Heart right ventricle (tissue), 16 donors: ENCODE measurements at regions of chr11 and their contacts with region 1.

Region 1: GRCh38 chr11:75022759-75023396 is 34.1 kb downstream of the NEU3 start:
- DNase-seq: peak; percentile 75 to 79
- ATAC-seq: peak; percentile 67 to 95 (median 92)
- H3K4me3 ChIP-seq: no peak overlapping the region
- H3K27ac ChIP-seq: peak overlapping the region in 3 of 10 donors; percentile 5 to 60 (median 38)
- H3K4me1 ChIP-seq: peaks cover 0 to 21% (median 4%) of the 10 kb centered on the region in 9 donors
- H3K27me3 ChIP-seq: no peaks in the 10 kb centered on the region
- CTCF ChIP-seq: peak; percentile 81 to 97 (median 94)

Region 2: GRCh38 chr11:74418509-74418895 is 604.4 kb before region 1 on chr11:
- intact Hi-C with region 1: no loop called
- DNase-seq: no peak
- ATAC-seq: peak in 6 of 8 donors; percentile 12 to 79 (median 72)
- H3K4me3 ChIP-seq: no peak overlapping the region
- H3K27ac ChIP-seq: peak overlapping the region in 4 of 10 donors; percentile 30 to 72 (median 54)
- H3K4me1 ChIP-seq: peaks cover 0 to 15% (median 0%) of the 10 kb centered on the region in 9 donors
- H3K27me3 ChIP-seq: peaks cover 0 to under 1% (median 0%) of the 10 kb centered on the region in 7 donors
- CTCF ChIP-seq: no peak

Region 3: GRCh38 chr11:74683279-74683871 is 339.5 kb before region 1 on chr11:
- intact Hi-C with region 1: no loop called
- DNase-seq: peak in 1 of 2 donors; percentile 46
- ATAC-seq: peak in 5 of 8 donors; percentile 2 to 76 (median 36)
- H3K4me3 ChIP-seq: peak overlapping the region in 9 of 10 donors; percentile 26 to 56 (median 52)
- H3K27ac ChIP-seq: peak overlapping the region in 9 of 10 donors; percentile 32 to 77 (median 65)
- H3K4me1 ChIP-seq: peaks cover 0 to 68% (median 24%) of the 10 kb centered on the region in 9 donors
- H3K27me3 ChIP-seq: peaks cover 0 to 23% (median 5%) of the 10 kb centered on the region in 7 donors
- CTCF ChIP-seq: peak in 8 of 9 donors; percentile 36 to 57 (median 54)

Region 4: DNA sequence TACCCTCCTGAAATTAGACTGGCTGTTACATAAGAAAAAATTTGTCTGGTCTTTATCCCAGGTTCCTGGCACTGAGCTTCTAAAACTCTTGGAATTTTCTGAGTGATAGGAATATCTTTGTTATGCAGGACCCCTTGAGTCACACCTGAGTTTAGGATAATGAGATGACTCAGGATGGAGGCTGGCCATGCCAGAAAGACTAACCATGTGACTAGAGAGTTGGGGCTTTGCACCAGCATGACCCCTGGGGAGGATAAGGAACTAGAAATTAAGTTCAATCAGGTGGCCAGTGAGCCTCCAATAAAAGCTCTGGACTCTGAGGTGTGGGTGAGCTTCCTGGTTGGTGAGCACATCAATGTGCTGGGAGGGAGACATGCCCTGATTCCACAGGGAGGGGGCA is 162.1 kb before region 1 on chr11:
- intact Hi-C with region 1: no loop called
- DNase-seq: no peak
- ATAC-seq: no peak
- H3K4me3 ChIP-seq: no peak overlapping the region
- H3K27ac ChIP-seq: no peak overlapping the region
- H3K4me1 ChIP-seq: no peaks in the 10 kb centered on the region
- H3K27me3 ChIP-seq: no peaks in the 10 kb centered on the region
- CTCF ChIP-seq: no peak

Region 5: GRCh38 chr11:74937696-74938475 is 85.0 kb before region 1 on chr11:
- intact Hi-C with region 1: loop called in 1 of 10 experiments (anchors 5 kb)
- DNase-seq: no peak
- ATAC-seq: no peak
- H3K4me3 ChIP-seq: no peak overlapping the region
- H3K27ac ChIP-seq: no peak overlapping the region
- H3K4me1 ChIP-seq: peaks cover 0 to 25% (median 0%) of the 10 kb centered on the region in 9 donors
- H3K27me3 ChIP-seq: no peaks in the 10 kb centered on the region
- CTCF ChIP-seq: no peak

Region 6: DNA sequence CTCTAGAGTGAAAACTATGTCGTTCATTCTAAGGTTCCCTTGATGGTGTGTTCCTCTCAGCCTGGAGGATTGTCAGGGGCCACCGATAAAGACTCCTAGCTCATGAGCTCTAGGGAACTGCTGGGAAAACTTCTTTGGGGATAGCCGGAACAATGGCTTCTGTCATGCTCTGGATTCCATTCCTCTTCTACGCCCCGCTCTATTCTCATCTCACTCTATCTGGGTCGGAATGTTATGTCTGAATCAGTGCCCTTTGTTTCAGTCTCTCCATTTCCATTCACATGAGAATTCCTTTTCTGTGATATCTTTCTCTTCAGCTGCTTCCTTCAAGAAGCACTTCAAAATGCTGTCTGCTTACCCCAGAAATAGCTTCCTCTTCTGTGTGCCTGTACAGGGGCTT is 111.1 kb after region 1 on chr11:
- intact Hi-C with region 1: loop called in 1 of 10 experiments (anchors 10 kb)
- DNase-seq: no peak
- ATAC-seq: no peak
- H3K4me3 ChIP-seq: no peak overlapping the region
- H3K27ac ChIP-seq: no peak overlapping the region
- H3K4me1 ChIP-seq: no peaks in the 10 kb centered on the region
- H3K27me3 ChIP-seq: peaks cover 0 to 75% (median 39%) of the 10 kb centered on the region in 7 donors
- CTCF ChIP-seq: no peak

Region 7: DNA sequence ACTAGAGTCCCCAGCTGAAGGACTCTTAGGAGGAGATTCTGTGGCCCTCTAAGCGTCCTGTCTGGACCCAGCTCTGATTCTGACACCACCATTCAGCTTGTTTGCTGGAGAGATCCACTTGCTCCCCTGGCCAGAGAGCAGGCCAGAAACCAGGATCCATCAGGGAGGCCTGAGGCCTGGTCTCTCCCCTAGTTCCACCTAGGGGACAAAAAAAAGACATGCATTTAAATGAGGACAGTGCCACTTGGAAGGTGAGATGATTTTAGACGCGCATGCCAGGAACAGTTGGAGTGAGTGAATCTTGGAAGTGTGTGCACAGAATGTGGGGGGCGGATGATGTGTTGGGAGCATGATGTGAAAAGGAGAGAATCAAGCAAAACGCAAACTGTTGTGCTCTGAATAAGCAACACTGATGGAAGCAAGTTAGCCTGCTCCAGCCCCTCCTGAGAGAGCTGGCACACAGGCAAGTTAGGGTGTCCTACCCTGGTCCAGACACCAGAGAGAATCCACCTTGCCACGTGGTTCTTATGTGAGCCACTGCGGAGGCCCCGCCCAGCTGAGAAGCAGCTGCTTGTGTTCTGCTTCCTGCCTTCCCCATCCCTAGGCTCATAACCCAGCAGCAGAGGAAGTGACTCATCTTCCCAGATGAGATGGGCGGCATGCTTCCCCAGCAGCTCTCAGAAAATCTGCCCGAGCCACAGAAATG is 120.0 kb after region 1 on chr11:
- intact Hi-C with region 1: loop called in 3 of 10 experiments (anchors 5 to 10 kb)
- DNase-seq: peak; percentile 68 to 76
- ATAC-seq: peak; percentile 76 to 93 (median 89)
- H3K4me3 ChIP-seq: no peak overlapping the region
- H3K27ac ChIP-seq: peak overlapping the region in 5 of 10 donors; percentile 1 to 71 (median 56)
- H3K4me1 ChIP-seq: peaks cover 3 to 60% (median 25%) of the 10 kb centered on the region in 9 donors
- H3K27me3 ChIP-seq: peaks cover 0 to 19% (median 4%) of the 10 kb centered on the region in 7 donors
- CTCF ChIP-seq: no peak

Region 8: GRCh38 chr11:75204685-75205563 is 182.0 kb after region 1 on chr11:
- intact Hi-C with region 1: loop called in 1 of 10 experiments (anchors 5 kb)
- DNase-seq: peak; percentile 89 to 90
- ATAC-seq: peak; percentile 93 to 97 (median 96)
- H3K4me3 ChIP-seq: no peak overlapping the region
- H3K27ac ChIP-seq: peak overlapping the region in 2 of 10 donors; percentile 9 to 48
- H3K4me1 ChIP-seq: peaks cover 0 to 12% (median 3%) of the 10 kb centered on the region in 9 donors
- H3K27me3 ChIP-seq: peaks cover 0 to 3% (median 0%) of the 10 kb centered on the region in 7 donors
- CTCF ChIP-seq: peak; percentile 84 to 95 (median 93)

Region 9: GRCh38 chr11:75248690-75249268 is 225.9 kb after region 1 on chr11:
- intact Hi-C with region 1: loop called in 9 of 10 experiments (anchors 1 to 5 kb)
- DNase-seq: peak; percentile 86 to 90
- ATAC-seq: peak; percentile 86 to 95 (median 91)
- H3K4me3 ChIP-seq: no peak overlapping the region
- H3K27ac ChIP-seq: no peak overlapping the region
- H3K4me1 ChIP-seq: peaks cover 0 to 3% (median 0%) of the 10 kb centered on the region in 9 donors
- H3K27me3 ChIP-seq: peaks cover 0 to 32% (median 17%) of the 10 kb centered on the region in 7 donors
- CTCF ChIP-seq: peak; percentile 97 to 100 (median 100)